ENCODE measurements at regions of chr2 and their contacts with region 1.

Region 1: GRCh38 chr2:178796079-178796677 is 11.0 kb downstream of the TTN start:
- DNase-seq: peak in 5 of 9 donors; percentile 27 to 33 (median 28)
- ATAC-seq: no peak
- H3K4me3 ChIP-seq: no peak overlapping the region
- H3K4me3 Mint-ChIP-seq: no peak overlapping the region
- H3K27ac ChIP-seq: no peak overlapping the region
- H3K27ac Mint-ChIP-seq: no peak overlapping the region
- H3K4me1 ChIP-seq: no peaks in the 10 kb centered on the region
- H3K4me1 Mint-ChIP-seq: no peaks in the 10 kb centered on the region
- H3K27me3 ChIP-seq: no peaks in the 10 kb centered on the region
- H3K27me3 Mint-ChIP-seq: no peaks in the 10 kb centered on the region

Region 2: DNA sequence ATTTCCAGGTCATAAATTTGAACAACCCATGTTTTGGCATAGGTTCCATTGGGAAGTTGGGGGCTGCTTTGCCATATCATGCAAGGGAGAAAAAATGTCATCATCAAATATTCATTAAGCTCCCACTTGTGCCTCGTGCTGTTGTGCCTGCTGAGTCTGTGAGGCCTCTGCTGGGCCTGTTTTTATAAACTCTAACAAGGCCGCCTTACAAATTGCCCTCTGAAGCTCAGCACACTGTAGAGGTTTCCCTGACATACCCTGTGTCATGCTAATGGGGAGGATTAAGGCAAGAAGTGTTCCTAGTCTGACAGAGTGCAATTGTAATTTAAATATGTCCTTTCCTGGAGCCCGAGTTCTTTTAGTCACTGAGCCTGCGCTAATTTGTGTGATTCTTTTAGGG is 584.2 kb before region 1 on chr2:
- CTCF ChIA-PET with region 1: no interaction called
- POLR2A ChIA-PET with region 1: no interaction called
- intact Hi-C with region 1: loop called in 1 of 2 experiments (anchors 5 kb)
- DNase-seq: no peak
- ATAC-seq: no peak
- H3K4me3 ChIP-seq: no peak overlapping the region
- H3K4me3 Mint-ChIP-seq: no peak overlapping the region
- H3K27ac ChIP-seq: no peak overlapping the region
- H3K27ac Mint-ChIP-seq: no peak overlapping the region
- H3K4me1 ChIP-seq: no peaks in the 10 kb centered on the region
- H3K4me1 Mint-ChIP-seq: peaks cover 0 to 4% (median 0%) of the 10 kb centered on the region in 7 donors
- H3K27me3 ChIP-seq: no peaks in the 10 kb centered on the region
- H3K27me3 Mint-ChIP-seq: peaks cover 34 to 62% (median 47%) of the 10 kb centered on the region in 5 donors

Region 3: GRCh38 chr2:178914259-178914849 is 118.2 kb after region 1 on chr2:
- CTCF ChIA-PET with region 1: interaction called, 4 read pairs
- POLR2A ChIA-PET with region 1: no interaction called
- intact Hi-C with region 1: loop called (anchors 1 kb)
- DNase-seq: peak; percentile 32 to 67 (median 59)
- ATAC-seq: peak; percentile 90
- H3K4me3 ChIP-seq: no peak overlapping the region
- H3K4me3 Mint-ChIP-seq: no peak overlapping the region
- H3K27ac ChIP-seq: no peak overlapping the region
- H3K27ac Mint-ChIP-seq: no peak overlapping the region
- H3K4me1 ChIP-seq: no peaks in the 10 kb centered on the region
- H3K4me1 Mint-ChIP-seq: peaks cover 0 to 17% (median 4%) of the 10 kb centered on the region in 7 donors
- H3K27me3 ChIP-seq: no peaks in the 10 kb centered on the region
- H3K27me3 Mint-ChIP-seq: no peaks in the 10 kb centered on the region

Region 4: DNA sequence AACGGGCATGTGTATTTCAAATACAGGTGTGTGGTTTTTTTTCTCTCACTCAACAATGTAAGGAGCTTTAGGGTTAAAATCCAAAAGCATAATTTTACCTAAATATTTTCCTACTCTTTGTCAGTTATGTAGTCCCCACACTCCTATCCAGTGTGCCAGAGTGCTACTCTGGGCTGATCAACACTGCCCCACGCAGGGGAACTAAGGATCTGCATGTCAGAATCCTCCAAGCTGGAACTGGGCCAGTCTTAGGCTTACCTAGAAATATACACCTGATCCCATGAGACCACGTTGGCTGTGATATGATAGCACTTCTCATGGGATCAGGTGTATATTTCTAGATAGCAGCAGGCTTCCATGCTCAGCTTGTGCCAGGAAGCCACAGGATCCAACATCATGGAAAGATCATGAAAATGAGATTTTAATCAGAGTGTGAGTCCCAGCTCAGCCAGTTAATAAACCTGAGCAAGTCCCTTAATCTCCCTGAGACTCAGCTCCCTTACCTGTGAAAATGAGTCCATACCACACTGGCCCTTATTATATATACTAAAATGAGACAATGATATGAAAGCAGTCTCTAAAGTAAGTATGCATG is 224.1 kb after region 1 on chr2:
- CTCF ChIA-PET with region 1: no interaction called
- POLR2A ChIA-PET with region 1: no interaction called
- intact Hi-C with region 1: loop called in 1 of 2 experiments (anchors 5 kb)
- DNase-seq: peak in 7 of 9 donors; percentile 17 to 44 (median 34)
- ATAC-seq: peak; percentile 80
- H3K4me3 ChIP-seq: no peak overlapping the region
- H3K4me3 Mint-ChIP-seq: no peak overlapping the region
- H3K27ac ChIP-seq: no peak overlapping the region
- H3K27ac Mint-ChIP-seq: no peak overlapping the region
- H3K4me1 ChIP-seq: peaks cover 0 to 10% of the 10 kb centered on the region in 2 donors
- H3K4me1 Mint-ChIP-seq: peaks cover 7 to 37% (median 27%) of the 10 kb centered on the region in 7 donors
- H3K27me3 ChIP-seq: no peaks in the 10 kb centered on the region
- H3K27me3 Mint-ChIP-seq: no peaks in the 10 kb centered on the region

Region 5: GRCh38 chr2:179410552-179411356 is 614.6 kb after region 1 on chr2:
- CTCF ChIA-PET with region 1: no interaction called
- POLR2A ChIA-PET with region 1: no interaction called
- intact Hi-C with region 1: no loop called
- DNase-seq: peak in 1 of 9 donors; percentile 11
- ATAC-seq: no peak
- H3K4me3 ChIP-seq: no peak overlapping the region
- H3K4me3 Mint-ChIP-seq: no peak overlapping the region
- H3K27ac ChIP-seq: no peak overlapping the region
- H3K27ac Mint-ChIP-seq: peak overlapping the region in 1 of 9 donors; percentile 9
- H3K4me1 ChIP-seq: no peaks in the 10 kb centered on the region
- H3K4me1 Mint-ChIP-seq: peaks cover 0 to 9% (median 0%) of the 10 kb centered on the region in 7 donors
- H3K27me3 ChIP-seq: no peaks in the 10 kb centered on the region
- H3K27me3 Mint-ChIP-seq: peaks cover 15 to 57% (median 41%) of the 10 kb centered on the region in 5 donors